GM10248 (cell line): ENCODE measurements at regions of chr11 and their contacts with region 1.

Region 1: GRCh38 chr11:92166335-92166734 is 58.3 kb upstream of the FAT3 start:
- DNase-seq: no peak
- CTCF ChIP-seq: no peak

Region 2: GRCh38 chr11:92152245-92152644 is 14.1 kb before region 1 on chr11:
- CTCF ChIA-PET with region 1: interaction called, 10 read pairs
- POLR2A ChIA-PET with region 1: no interaction called
- DNase-seq: no peak
- CTCF ChIP-seq: no peak